ENCODE measurements at regions of chr1 and their contacts with region 1.

Region 1: DNA sequence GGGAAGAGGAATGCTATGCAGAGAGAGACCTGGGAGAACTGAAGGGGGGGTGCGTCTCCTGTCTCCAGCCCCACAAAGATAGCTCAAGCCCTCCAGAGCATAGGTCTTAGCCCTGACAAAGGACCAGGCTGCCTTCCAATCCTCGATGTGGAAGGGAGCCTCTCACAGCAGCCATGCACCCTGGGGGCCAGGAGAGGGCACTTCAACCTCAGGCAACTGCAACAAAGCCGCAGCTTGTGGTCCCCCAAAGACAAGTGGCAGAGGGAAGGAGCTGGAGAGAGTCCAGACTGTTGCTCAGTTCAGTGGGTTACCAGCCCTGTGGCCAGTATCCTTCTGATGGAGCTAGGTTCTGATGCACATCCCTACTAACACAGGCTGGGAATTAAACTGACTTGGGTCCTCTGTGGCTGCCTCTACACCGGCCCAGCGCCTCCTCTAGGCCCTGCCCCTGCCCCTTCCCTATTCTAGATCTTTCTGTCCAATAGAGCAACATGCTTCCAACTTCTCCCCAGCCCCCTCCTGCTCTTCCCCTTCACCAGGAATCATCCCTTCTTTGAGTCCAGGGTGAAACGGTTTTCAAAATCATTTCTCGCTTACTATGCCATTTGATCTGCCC is 100.8 kb upstream of the SPATA6 start:
- DNase-seq: peak; percentile 52 to 68
- H3K4me3 ChIP-seq: no peak overlapping the region
- H3K27ac ChIP-seq: no peak overlapping the region
- H3K4me1 ChIP-seq: no peaks in the 10 kb centered on the region
- H3K27me3 ChIP-seq: no peaks in the 10 kb centered on the region
- CTCF ChIP-seq: peak in 5 of 6 experiments; percentile 34 to 67 (median 57)
- POLR2A ChIP-seq: no peak

Region 2: GRCh38 chr1:48493970-48494769 is 78.6 kb before region 1 on chr1:
- intact Hi-C with region 1: no loop called
- DNase-seq: peak; percentile 15 to 22
- H3K4me3 ChIP-seq: no peak overlapping the region
- H3K27ac ChIP-seq: peak overlapping the region in 2 of 3 donors; percentile 59 to 60
- H3K4me1 ChIP-seq: peaks cover 9 to 25% of the 10 kb centered on the region in 2 donors
- H3K27me3 ChIP-seq: no peaks in the 10 kb centered on the region
- CTCF ChIP-seq: no peak
- POLR2A ChIP-seq: no peak

Region 3: GRCh38 chr1:48697066-48697707 is 124.4 kb after region 1 on chr1:
- intact Hi-C with region 1: loop called (anchors 5 kb)
- DNase-seq: peak; percentile 62 to 63
- H3K4me3 ChIP-seq: no peak overlapping the region
- H3K27ac ChIP-seq: no peak overlapping the region
- H3K4me1 ChIP-seq: no peaks in the 10 kb centered on the region
- H3K27me3 ChIP-seq: no peaks in the 10 kb centered on the region
- CTCF ChIP-seq: peak; percentile 63 to 92 (median 78)
- POLR2A ChIP-seq: no peak

Region 4: DNA sequence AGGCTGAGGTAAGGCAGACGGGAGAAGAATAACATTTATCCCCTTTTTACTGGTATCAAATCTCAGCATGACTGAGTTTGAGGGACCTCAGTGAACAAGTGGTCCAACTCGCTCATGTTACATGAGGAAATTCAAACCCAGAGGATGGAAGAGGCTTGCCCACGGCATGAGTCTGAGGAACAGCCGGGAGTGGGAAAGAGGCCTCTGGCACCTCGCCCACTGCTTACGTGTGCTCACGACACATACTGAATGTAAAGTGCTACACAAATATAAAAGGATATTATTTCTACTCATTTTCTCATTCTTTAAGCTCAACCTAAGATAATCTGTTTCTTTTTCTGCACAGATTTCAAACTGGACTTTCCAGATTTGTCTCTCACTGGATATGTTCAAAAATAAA is 189.2 kb after region 1 on chr1:
- intact Hi-C with region 1: no loop called
- DNase-seq: no peak
- H3K4me3 ChIP-seq: no peak overlapping the region
- H3K27ac ChIP-seq: no peak overlapping the region
- H3K4me1 ChIP-seq: no peaks in the 10 kb centered on the region
- H3K27me3 ChIP-seq: no peaks in the 10 kb centered on the region
- CTCF ChIP-seq: no peak
- POLR2A ChIP-seq: no peak

Measured in thyroid gland (tissue), 4 donors.